Dendritic cell treated with granulocyte-macrophage colony-stimulating factor and Interleukin-4, amounts not matched to agents 40 ng/mL and 50 ng/mL, for 4 days (primary cell): ENCODE measurements at regions of chrX and their contacts with region 1.

Region 1: GRCh38 chrX:16138108-16138427 is 14.7 kb downstream of the GRPR start:
- H3K4me3 Mint-ChIP-seq: no peak overlapping the region
- H3K27ac Mint-ChIP-seq: no peak overlapping the region
- H3K4me1 Mint-ChIP-seq: peaks cover 6% of the 10 kb centered on the region
- H3K27me3 Mint-ChIP-seq: peaks cover 7% of the 10 kb centered on the region

Region 2: DNA sequence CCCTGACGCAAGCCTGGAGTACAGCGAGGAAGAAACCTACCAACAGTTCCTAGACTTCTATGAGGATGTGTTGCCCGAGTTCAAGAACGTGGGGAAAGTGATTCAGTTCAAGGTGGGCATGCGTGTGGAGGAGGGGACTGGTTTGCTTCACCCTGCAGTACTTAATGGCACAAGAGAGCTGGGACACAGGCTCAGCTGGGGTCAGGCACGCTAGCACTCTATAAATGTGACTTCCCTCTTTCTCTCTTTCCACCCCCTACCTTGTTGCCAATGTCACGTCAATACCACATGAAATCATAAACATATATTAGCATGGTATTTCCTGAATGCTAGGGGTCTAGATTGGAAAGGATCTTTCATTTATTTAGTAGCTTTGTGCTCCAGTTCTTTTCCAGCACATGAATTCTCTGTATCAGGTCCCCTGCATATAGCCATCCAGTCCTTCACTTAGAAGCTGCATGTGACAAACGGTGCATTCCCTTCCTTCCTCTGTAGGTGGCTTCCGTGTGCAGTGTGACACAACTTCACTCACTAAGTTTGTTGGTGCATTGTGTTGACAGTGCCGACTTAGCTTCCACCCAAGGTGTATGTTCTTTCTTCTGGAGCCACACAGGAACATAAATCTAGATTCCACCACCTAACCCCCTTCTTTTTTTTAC is 322.2 kb before region 1 on chrX:
- intact Hi-C with region 1: no loop called
- H3K4me3 Mint-ChIP-seq: no peak overlapping the region
- H3K27ac Mint-ChIP-seq: peak overlapping the region; percentile 41
- H3K4me1 Mint-ChIP-seq: peaks cover 9% of the 10 kb centered on the region
- H3K27me3 Mint-ChIP-seq: no peaks in the 10 kb centered on the region

Region 3: DNA sequence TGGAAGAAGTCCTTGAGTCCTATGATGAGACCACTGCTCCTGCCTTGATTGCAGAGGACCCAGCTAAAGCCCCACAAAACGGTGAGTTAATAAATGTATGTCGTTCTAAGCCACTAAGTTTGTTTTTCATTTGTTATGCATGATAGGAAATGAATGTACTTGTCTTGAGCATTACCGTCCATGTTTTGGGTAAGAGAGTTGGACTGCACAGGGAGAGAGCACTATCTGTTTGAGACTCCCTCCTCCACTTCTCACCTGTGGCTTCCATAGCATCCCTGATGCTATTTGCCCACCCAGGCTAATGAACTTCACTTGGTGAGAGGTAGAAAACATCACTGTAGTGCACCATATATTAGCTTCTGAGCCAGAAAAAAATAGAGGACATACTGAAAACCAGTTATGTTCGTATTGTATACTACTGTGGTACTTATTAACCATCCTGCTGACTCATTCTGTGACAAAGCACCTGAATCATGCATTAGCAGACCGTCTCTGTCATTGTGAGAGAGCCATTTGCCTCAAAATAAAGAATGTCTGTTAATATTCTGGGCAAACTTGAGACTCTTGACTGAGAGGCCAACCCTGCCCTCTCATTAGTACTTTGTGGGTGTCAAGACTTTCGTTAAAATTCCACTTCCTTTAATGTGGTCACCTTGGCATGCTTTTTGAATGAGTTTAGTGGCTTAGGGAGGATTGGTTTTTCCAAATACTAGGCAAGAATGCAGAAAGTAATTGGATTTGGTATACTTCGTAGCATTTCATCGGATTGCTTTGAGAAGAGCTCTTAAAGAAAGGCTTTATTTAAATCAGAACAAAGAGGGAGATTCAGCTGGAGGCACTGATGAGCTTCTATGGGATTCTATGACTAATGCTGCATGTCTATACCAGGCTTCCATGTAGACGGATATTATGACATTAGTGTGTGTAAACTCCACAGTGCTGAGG is 114.0 kb before region 1 on chrX:
- intact Hi-C with region 1: no loop called
- H3K4me3 Mint-ChIP-seq: no peak overlapping the region
- H3K27ac Mint-ChIP-seq: no peak overlapping the region
- H3K4me1 Mint-ChIP-seq: peaks cover 28% of the 10 kb centered on the region
- H3K27me3 Mint-ChIP-seq: peaks cover 3% of the 10 kb centered on the region

Region 4: DNA sequence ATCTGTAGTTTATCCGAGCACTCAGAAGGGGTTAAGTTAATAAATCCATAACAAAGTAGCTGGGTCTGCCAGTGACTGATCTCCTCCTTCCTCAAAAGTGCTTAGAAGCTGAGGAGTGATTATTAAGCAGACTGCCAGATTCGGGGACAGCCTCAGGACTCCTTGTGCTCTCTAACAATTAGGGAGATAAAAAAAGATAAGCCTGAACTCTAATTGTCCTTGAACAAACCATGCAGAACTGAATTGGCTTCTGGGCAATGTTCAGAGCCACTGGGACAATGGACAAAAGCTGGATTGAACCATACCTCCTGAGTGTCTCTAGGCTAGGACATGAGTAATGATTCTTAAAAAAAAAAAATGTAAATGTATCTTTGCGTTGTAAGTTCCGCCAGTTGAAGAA is 37.4 kb before region 1 on chrX:
- intact Hi-C with region 1: no loop called
- H3K4me3 Mint-ChIP-seq: no peak overlapping the region
- H3K27ac Mint-ChIP-seq: no peak overlapping the region
- H3K4me1 Mint-ChIP-seq: peaks cover 16% of the 10 kb centered on the region
- H3K27me3 Mint-ChIP-seq: no peaks in the 10 kb centered on the region

Region 5: DNA sequence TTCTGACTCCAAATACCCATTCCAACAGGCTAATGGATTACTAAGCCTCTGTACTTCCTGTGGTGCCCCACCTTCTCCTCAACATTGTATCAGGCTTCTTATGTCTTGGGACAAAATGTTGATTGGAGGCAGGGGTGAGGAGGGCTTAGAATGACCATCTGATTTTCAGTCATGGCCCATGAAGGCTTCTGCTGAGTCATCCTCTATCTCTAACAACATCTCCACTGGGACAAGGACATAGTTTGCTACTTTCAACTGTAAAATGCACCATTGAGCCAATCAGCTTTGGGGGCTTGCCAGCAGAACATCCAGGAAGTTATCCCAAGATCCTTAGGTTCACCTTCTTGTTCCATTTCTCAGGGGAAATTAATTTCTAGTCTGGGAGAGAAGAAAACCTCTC is 58.8 kb after region 1 on chrX:
- intact Hi-C with region 1: loop called (anchors 10 kb)
- H3K4me3 Mint-ChIP-seq: no peak overlapping the region
- H3K27ac Mint-ChIP-seq: no peak overlapping the region
- H3K4me1 Mint-ChIP-seq: no peaks in the 10 kb centered on the region
- H3K27me3 Mint-ChIP-seq: peaks cover 6% of the 10 kb centered on the region